ENCODE measurements at regions of chr2 and their contacts with region 1.

Region 1: GRCh38 chr2:30862054-30862651 is 54.9 kb upstream of the CAPN13 start:
- DNase-seq: peak; percentile 42
- H3K4me3 Mint-ChIP-seq: no peak overlapping the region
- H3K27ac Mint-ChIP-seq: no peak overlapping the region
- H3K4me1 Mint-ChIP-seq: peaks cover 18% of the 10 kb centered on the region
- H3K27me3 Mint-ChIP-seq: peaks cover 8% of the 10 kb centered on the region

Region 2: DNA sequence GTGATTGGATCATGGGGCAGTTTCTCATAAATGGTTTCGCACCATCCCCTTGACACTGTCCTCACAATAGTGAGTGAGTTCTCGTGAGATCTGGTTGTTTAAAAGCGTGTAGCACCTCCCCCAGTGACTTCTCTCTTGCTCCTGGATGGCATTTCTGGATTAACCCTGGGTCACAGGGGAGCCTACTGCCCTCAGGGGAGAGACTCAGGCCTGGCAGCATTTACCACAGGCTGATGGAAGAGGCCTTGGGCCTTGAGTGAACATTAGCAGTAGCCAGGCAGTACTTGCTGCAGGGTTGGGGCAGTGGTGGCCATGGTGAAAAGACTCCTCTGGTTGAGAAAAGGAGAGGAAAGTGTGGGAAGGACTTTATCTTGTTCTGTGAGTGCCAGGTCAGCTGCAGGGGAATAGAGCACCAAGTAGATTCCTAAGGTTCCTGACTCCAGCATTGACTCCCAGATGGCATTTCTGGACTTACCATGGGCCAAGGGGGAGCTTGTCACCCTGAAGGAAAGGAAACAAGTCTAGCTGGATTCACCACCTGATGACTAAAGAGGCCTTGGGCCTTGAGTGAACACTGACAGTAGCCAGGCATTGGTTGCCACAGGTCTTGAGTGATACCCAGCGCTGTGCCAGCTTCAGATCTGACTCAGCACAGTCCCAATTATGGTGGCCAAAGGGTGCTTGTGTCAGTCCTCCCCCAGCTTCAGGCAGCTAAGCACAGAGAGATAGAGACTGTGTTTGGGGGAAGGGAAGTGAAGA is 15.0 kb before region 1 on chr2:
- CTCF ChIA-PET with region 1: no interaction called
- POLR2A ChIA-PET with region 1: no interaction called
- DNase-seq: no peak
- H3K4me3 Mint-ChIP-seq: no peak overlapping the region
- H3K27ac Mint-ChIP-seq: no peak overlapping the region
- H3K4me1 Mint-ChIP-seq: no peaks in the 10 kb centered on the region
- H3K27me3 Mint-ChIP-seq: peaks cover 6% of the 10 kb centered on the region

Region 3: GRCh38 chr2:31333527-31334183 is 471.5 kb after region 1 on chr2:
- CTCF ChIA-PET with region 1: interaction called, 27 read pairs
- POLR2A ChIA-PET with region 1: no interaction called
- DNase-seq: peak; percentile 83
- H3K4me3 Mint-ChIP-seq: no peak overlapping the region
- H3K27ac Mint-ChIP-seq: no peak overlapping the region
- H3K4me1 Mint-ChIP-seq: no peaks in the 10 kb centered on the region
- H3K27me3 Mint-ChIP-seq: peaks cover 21% of the 10 kb centered on the region

Measured in activated CD4-positive, alpha-beta memory T cell treated with anti-CD3 and anti-CD28 coated beads, Interleukin-2, amount 10 ng/mL, durations not matched to agents 7 days and 5 days (primary cell).